Left ventricle myocardium inferior (tissue), 1 donor: ENCODE measurements at regions of chr7 and their contacts with region 1.

Region 1: DNA sequence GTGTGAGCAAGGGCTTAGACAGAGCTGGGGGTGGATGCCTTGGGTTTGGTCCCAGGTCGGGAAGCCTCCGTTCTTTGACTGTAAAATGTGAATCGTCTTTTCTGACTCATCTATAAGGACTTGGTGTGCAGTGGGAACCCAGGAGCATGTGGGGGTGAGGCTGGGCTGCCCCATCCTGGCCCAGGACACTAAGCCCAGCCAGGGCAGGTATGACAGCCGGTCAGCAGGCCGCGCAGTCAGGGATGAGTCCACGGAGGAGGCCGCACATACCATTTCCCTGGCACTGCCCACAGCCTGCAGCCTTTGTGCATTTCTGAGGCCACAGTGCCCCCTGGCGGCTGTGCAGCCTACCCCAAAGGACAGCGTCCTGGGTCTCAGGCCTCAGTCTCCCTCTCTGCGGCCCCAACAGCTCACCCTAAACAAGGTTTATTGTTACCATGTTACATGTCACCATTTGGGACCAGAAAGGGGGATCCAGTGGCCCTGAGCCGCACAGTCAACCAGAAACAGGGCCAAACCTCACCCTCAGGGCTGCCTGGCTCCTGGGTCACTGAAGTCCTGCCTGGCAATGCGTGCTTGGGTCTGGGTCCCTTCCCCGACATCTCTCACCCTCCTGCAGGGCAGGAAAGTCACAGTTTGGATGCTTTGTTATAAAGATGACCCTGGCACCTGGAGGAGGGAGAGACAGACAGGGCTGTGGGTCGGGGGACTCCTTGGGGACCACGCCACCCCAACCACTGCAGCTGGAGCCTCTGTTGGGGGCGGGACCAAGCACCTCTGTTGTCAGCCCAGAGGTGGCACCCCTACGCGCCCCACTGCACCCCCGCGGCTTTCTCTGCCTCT is 14.4 kb upstream of the SH2B2 start:
- DNase-seq: peak; percentile 75
- H3K4me3 ChIP-seq: no peak overlapping the region
- H3K27ac ChIP-seq: no peak overlapping the region
- H3K4me1 ChIP-seq: no peaks in the 10 kb centered on the region
- H3K27me3 ChIP-seq: no peaks in the 10 kb centered on the region
- CTCF ChIP-seq: peak; percentile 90

Region 2: GRCh38 chr7:101542527-101543241 is 729.6 kb before region 1 on chr7:
- intact Hi-C with region 1: loop called (anchors 5 kb)
- DNase-seq: peak; percentile 56
- H3K4me3 ChIP-seq: no peak overlapping the region
- H3K27ac ChIP-seq: no peak overlapping the region
- H3K4me1 ChIP-seq: peaks cover 3% of the 10 kb centered on the region
- H3K27me3 ChIP-seq: peaks cover 12% of the 10 kb centered on the region
- CTCF ChIP-seq: peak; percentile 87